AG04450 (cell line): ENCODE measurements at regions of chr2 and their contacts with region 1.

Region 1: DNA sequence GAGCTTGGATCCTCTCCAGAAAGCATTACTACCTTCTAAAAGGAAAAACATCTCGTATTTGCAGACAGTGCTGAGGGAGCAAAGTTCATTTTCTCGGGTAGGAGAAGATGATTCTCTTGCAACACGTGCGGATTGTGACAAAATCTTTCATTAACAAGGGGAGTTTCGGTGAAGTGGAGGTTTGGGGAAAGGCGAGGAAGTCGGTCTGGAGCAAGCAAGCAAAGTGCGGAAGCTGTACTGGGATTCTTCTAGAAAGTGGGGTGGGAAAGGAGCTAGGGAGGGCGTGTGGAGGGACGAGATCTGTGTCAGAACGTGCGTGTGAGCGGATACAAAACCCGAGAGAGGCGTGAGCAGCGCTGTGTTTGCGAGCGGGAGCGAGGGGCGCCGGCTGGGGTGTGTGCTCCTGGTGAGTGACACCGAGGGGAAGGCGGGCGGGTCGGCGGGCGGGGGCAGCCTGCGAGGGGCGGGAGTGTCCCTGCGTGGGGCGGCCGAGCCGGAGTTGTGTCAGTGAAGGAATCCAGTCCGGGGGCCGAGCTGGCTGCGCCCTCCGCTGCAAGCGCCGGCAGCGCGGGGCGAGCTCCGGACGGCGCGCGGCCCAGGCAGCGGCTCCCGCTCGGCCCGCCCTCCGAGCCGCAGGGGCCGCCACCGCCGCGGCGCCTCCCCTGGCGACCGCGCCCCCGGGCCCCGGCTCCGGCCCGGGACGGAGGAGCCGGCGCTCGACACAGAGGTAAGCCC is at the start of gene SPATS2L:
- DNase-seq: peak; percentile 78
- H3K4me3 ChIP-seq: peak within 1 kb of the TSS; percentile 74
- H3K27ac ChIP-seq: peak within 1 kb of the TSS; percentile 84
- H3K27me3 ChIP-seq: no peaks in the 10 kb centered on the region
- CTCF ChIP-seq: no peak
- polyA plus RNA-seq, gene SPATS2L: 335 and 361 TPM in 2 replicates

Region 2: GRCh38 chr2:199979832-199980628 is 326.3 kb before region 1 on chr2:
- CTCF ChIA-PET with region 1: interaction called, 32 read pairs
- POLR2A ChIA-PET with region 1: no interaction called
- DNase-seq: peak; percentile 63
- H3K4me3 ChIP-seq: peak overlapping the region; percentile 11; the same call in 1 of the 2 replicates
- H3K27ac ChIP-seq: no peak overlapping the region
- H3K27me3 ChIP-seq: no peaks in the 10 kb centered on the region
- CTCF ChIP-seq: peak; percentile 81

Region 3: DNA sequence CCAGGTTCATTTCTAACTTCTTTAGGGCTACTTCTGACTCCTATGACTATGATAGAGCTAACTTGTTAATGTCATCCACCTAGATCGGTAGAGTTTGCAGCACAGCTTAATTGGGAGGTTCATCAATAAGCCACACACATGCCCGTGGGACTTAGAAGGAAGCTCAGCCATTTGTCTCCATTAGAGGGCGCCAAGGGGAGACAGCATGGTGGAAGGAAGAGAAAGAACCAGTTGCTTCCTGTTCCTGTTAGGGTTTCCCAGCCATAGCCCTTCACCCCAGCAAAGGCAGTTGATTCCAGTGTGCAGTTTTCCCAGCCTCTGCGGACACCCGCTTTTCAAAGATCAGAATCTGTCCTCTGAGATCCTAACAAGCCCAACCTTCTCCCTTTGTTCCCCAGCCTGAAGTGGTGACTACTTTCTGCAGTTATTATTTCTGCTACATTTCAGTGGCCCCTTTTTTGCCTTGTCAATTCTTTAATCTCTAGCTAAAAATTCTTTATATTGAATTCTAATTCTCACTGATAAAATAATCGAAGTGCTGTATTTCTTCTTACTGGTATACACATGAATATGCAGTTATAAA is 320.6 kb before region 1 on chr2:
- CTCF ChIA-PET with region 1: interaction called, 15 read pairs
- POLR2A ChIA-PET with region 1: no interaction called
- DNase-seq: peak; percentile 34
- H3K4me3 ChIP-seq: no peak overlapping the region
- H3K27ac ChIP-seq: no peak overlapping the region
- H3K27me3 ChIP-seq: no peaks in the 10 kb centered on the region
- CTCF ChIP-seq: peak; percentile 74

Region 4: GRCh38 chr2:200247494-200247893 is 58.9 kb before region 1 on chr2:
- CTCF ChIA-PET with region 1: no interaction called
- POLR2A ChIA-PET with region 1: interaction called, 10 read pairs
- DNase-seq: peak; percentile 76
- H3K4me3 ChIP-seq: no peak overlapping the region
- H3K27ac ChIP-seq: peak overlapping the region; percentile 68
- H3K27me3 ChIP-seq: no peaks in the 10 kb centered on the region
- CTCF ChIP-seq: no peak